GM10248 (cell line): ENCODE measurements at regions of chr17 and their contacts with region 1.

Region 1: GRCh38 chr17:74770498-74771318 is 5.4 kb downstream of the NAT9 start:
- DNase-seq: peak; percentile 75
- CTCF ChIP-seq: peak; percentile 95

Region 2: DNA sequence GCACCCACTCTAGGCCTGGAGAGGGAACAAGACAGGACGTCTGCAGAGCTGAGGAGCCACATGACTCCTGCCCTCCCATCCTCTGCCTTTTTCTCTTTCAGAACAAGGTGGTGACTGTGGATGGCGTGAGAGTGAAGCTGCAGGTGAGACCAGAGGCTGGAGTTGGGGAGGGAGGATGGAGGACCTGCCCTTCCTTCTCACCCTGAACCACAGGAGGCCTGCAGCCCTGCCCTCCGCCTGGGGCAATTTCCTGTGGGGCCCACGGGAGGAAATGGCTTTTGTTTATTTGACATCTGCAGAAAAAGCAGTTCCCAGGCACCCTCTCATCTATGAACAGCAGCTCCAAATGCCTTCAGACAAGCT is 28.6 kb before region 1 on chr17:
- CTCF ChIA-PET with region 1: interaction called, 88 read pairs
- POLR2A ChIA-PET with region 1: no interaction called
- DNase-seq: peak; percentile 62
- CTCF ChIP-seq: no peak

Region 3: DNA sequence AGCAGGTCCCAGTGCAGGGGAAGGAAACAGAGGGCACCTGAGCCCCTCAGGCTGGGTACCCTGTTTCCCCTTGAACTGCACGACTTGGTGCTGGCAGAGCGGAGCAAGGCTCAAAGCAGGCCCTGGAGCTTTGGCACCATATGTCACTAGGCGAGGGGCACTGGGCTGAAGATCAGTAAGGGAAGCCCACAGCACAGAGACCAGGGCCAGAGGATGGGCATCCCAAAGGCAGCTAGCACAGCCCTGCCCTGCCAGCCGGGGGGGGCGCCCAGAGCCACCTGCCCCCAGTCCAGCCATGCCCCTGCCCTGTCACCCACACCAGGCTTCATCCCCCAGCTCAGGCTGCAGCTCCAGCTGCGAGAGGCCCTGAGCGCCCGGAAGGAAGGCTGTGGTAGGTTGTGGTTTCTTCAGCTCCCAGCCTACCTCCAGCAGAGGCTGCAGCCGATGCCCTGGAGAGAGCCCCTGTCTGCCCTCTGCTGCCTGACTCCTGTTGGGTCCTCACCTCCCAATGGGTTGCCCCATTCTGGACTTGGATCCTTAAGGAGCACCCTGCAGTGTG is 11.4 kb before region 1 on chr17:
- CTCF ChIA-PET with region 1: interaction called, 82 read pairs
- POLR2A ChIA-PET with region 1: interaction called, 6 read pairs
- DNase-seq: peak; percentile 69
- CTCF ChIP-seq: peak; percentile 16

Region 4: DNA sequence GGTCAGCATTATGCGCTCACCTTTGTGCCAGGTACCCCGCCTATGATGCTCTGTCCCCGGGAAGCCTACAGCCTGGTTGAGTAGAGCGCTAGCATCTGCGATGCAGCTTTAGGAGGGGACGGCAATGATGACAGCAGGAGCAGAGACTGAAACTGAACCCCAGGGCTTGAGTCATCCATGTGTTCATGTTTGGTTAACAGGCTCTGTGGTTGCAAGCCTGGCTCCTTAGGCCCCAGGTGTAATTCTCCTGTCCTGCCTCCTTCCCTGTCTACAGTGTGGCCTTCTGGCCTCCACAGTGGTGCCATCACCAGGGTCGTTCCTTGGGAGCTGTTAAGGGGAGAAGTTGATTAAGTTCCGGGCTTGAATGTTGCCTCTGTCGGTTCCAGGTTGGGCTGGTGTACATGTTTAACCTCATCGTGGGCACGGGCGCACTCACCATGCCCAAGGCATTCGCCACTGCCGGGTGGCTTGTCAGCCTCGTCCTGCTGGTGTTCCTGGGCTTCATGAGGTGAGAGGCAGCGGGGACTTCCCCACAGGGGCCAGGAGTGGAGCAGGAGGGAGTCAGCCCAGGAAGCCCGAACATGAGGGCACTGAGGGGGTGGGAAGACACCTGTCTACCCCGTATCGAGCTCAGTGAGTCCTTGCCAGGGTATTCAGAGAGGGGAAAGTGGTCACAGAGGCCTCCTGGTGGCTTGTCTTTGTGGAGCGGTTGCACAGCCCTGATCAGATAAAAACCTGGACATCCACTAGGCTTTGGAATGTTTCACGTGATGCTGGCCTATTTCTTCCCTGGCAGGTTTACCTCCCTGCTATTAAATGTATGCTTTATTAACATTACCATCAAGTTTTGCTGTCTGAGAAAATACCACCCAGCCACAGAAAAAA is 14.6 kb after region 1 on chr17:
- CTCF ChIA-PET with region 1: interaction called, 143 read pairs
- POLR2A ChIA-PET with region 1: no interaction called
- DNase-seq: no peak
- CTCF ChIP-seq: no peak